Naive thymus-derived CD4-positive, alpha-beta T cell (primary cell): ENCODE measurements at regions of chr2 and their contacts with region 1.

Region 1: GRCh38 chr2:105858868-105859693 is 114.4 kb downstream of the NCK2 start:
- DNase-seq: peak in 1 of 9 donors; percentile 45
- ATAC-seq: no peak
- H3K4me3 ChIP-seq: no peak overlapping the region
- H3K4me3 Mint-ChIP-seq: peak overlapping the region; percentile 49 to 91 (median 80)
- H3K27ac ChIP-seq: peak overlapping the region; percentile 66
- H3K27ac Mint-ChIP-seq: peak overlapping the region; percentile 80 to 98 (median 92)
- H3K4me1 ChIP-seq: peaks cover 71 to 91% of the 10 kb centered on the region in 2 donors
- H3K4me1 Mint-ChIP-seq: peaks cover 54 to 97% (median 94%) of the 10 kb centered on the region in 7 donors
- H3K27me3 ChIP-seq: no peaks in the 10 kb centered on the region
- H3K27me3 Mint-ChIP-seq: no peaks in the 10 kb centered on the region

Region 2: DNA sequence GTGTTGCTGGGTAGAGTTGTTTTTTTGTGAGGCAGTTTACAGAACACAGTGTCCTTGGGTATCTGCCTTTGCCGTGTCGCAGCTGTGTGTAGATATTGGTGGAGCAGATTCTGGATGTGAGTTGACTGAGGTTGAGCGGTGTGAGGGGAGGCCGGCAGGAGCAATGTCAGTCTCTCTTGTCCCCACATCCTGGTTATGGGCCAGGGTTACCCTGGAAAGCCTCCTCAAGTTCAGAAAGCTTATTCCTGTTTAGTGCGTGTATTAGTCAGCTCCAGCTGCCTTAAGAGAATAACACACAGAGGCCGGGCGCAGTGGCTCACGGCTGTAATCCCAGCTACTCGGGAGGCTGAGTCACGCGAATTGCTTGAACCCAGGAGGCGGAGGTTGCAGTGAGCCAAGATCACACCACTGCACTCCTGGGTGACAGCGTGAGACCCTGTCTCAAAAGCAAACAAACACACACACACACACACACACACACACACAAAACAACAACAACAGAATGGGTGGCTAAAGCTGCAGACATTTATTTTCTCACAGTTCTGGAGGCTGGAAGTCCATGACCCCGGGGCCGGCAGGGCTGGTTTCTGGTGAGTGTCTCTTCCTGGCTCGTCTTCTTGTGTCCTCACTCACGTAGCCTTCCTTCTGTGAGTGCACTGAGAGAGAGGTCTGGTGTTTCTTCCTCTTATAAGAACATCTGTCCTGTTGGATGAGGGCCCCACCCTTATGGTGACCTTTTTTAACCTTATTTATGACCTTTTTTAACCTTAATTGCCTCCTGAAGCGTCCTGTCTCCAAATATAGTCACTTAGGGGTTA is 109.3 kb before region 1 on chr2:
- CTCF ChIA-PET with region 1: no interaction called
- POLR2A ChIA-PET with region 1: interaction called, 3 read pairs
- intact Hi-C with region 1: loop called (anchors 2 to 5 kb)
- DNase-seq: no peak
- ATAC-seq: peak; percentile 5
- H3K4me3 ChIP-seq: peak overlapping the region; percentile 94
- H3K4me3 Mint-ChIP-seq: peak overlapping the region; percentile 71 to 99 (median 93)
- H3K27ac ChIP-seq: peak overlapping the region; percentile 89
- H3K27ac Mint-ChIP-seq: peak overlapping the region; percentile 92 to 99 (median 97)
- H3K4me1 ChIP-seq: peaks cover 67 to 74% of the 10 kb centered on the region in 2 donors
- H3K4me1 Mint-ChIP-seq: peaks cover 53 to 85% (median 81%) of the 10 kb centered on the region in 7 donors
- H3K27me3 ChIP-seq: no peaks in the 10 kb centered on the region
- H3K27me3 Mint-ChIP-seq: no peaks in the 10 kb centered on the region

Region 3: GRCh38 chr2:105834931-105835330 is 24.1 kb before region 1 on chr2:
- CTCF ChIA-PET with region 1: no interaction called
- POLR2A ChIA-PET with region 1: interaction called, 4 read pairs
- intact Hi-C with region 1: loop called in 1 of 2 experiments (anchors 1 kb)
- DNase-seq: peak in 6 of 9 donors; percentile 56 to 80 (median 70)
- ATAC-seq: peak; percentile 59
- H3K4me3 ChIP-seq: no peak overlapping the region
- H3K4me3 Mint-ChIP-seq: peak overlapping the region; percentile 0 to 54 (median 30)
- H3K27ac ChIP-seq: peak overlapping the region; percentile 61
- H3K27ac Mint-ChIP-seq: peak overlapping the region; percentile 40 to 95 (median 78)
- H3K4me1 ChIP-seq: peaks cover 43 to 49% of the 10 kb centered on the region in 2 donors
- H3K4me1 Mint-ChIP-seq: peaks cover 45 to 96% (median 87%) of the 10 kb centered on the region in 7 donors
- H3K27me3 ChIP-seq: no peaks in the 10 kb centered on the region
- H3K27me3 Mint-ChIP-seq: no peaks in the 10 kb centered on the region

Region 4: GRCh38 chr2:105873721-105874120 is 14.6 kb after region 1 on chr2:
- CTCF ChIA-PET with region 1: no interaction called
- POLR2A ChIA-PET with region 1: no interaction called
- intact Hi-C with region 1: loop called (anchors 2 kb)
- DNase-seq: peak in 1 of 9 donors; percentile 80
- ATAC-seq: peak; percentile 70
- H3K4me3 ChIP-seq: no peak overlapping the region
- H3K4me3 Mint-ChIP-seq: peak overlapping the region in 4 of 10 donors; percentile 8 to 73 (median 22)
- H3K27ac ChIP-seq: peak overlapping the region; percentile 1
- H3K27ac Mint-ChIP-seq: peak overlapping the region; percentile 26 to 90 (median 80)
- H3K4me1 ChIP-seq: peaks cover 74 to 87% of the 10 kb centered on the region in 2 donors
- H3K4me1 Mint-ChIP-seq: peaks cover 65 to 100% (median 97%) of the 10 kb centered on the region in 7 donors
- H3K27me3 ChIP-seq: no peaks in the 10 kb centered on the region
- H3K27me3 Mint-ChIP-seq: no peaks in the 10 kb centered on the region

Region 5: DNA sequence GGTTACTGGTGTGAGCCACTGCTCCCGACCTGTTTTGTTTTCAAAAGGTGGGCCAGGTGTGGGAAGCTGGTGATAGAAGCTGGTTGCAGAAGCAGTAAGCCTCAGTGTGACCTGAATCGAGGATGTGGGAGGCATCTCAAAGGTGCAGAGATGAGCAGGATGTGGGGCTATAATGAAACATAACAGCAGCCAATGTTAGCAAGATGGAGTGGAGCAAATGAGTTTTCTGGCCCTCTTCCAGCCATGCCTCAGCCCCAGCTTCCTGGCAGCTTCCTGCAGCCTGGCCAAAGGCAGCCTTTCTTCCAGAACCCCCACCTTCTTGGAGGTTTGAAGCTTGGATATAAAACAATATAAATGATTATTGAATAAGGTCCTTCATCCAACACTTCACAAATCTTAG is 70.4 kb after region 1 on chr2:
- CTCF ChIA-PET with region 1: no interaction called
- POLR2A ChIA-PET with region 1: no interaction called
- intact Hi-C with region 1: loop called in 1 of 2 experiments (anchors 2 kb)
- DNase-seq: peak in 8 of 9 donors; percentile 31 to 79 (median 70)
- ATAC-seq: peak; percentile 72
- H3K4me3 ChIP-seq: no peak overlapping the region
- H3K4me3 Mint-ChIP-seq: peak overlapping the region in 9 of 10 donors; percentile 51 to 85 (median 64)
- H3K27ac ChIP-seq: peak overlapping the region; percentile 55
- H3K27ac Mint-ChIP-seq: peak overlapping the region; percentile 63 to 97 (median 90)
- H3K4me1 ChIP-seq: peaks cover 61 to 83% of the 10 kb centered on the region in 2 donors
- H3K4me1 Mint-ChIP-seq: peaks cover 48 to 76% (median 71%) of the 10 kb centered on the region in 7 donors
- H3K27me3 ChIP-seq: no peaks in the 10 kb centered on the region
- H3K27me3 Mint-ChIP-seq: no peaks in the 10 kb centered on the region